ENCODE measurements at regions of chr10 and their contacts with region 1.

Region 1: GRCh38 chr10:784403-785088 is 95.1 kb upstream of the DIP2C start:
- DNase-seq: peak; percentile 56 to 60
- H3K4me3 ChIP-seq: peak overlapping the region; percentile 36
- H3K4me3 Mint-ChIP-seq: peak overlapping the region; percentile 54
- H3K27ac Mint-ChIP-seq: no peak overlapping the region
- H3K4me1 ChIP-seq: peaks cover 9% of the 10 kb centered on the region
- H3K4me1 Mint-ChIP-seq: no peaks in the 10 kb centered on the region
- H3K27me3 ChIP-seq: no peaks in the 10 kb centered on the region
- H3K27me3 Mint-ChIP-seq: no peaks in the 10 kb centered on the region
- CTCF ChIP-seq: peak in 1 of 2 experiments; percentile 28

Region 2: DNA sequence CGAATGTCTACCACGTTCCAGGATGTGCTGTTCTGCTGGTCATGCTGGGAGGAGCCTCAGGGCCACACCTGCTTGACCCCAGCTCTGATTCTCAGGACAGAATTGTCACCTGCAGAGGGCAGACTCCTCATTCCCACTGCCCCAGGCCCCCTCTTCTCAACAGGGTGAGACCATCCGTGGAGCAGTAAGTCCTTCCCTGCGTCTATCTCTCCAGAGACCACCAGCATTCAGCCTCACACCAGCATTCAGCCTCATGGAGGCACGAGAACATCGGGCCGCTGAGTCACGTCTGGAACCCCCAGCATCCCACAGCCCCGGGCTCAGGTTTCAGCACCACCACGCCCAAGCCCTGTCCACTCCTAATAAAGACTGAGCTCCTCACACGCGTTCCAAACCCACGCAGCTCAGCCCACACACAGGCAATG is 368.4 kb before region 1 on chr10:
- CTCF ChIA-PET with region 1: no interaction called
- POLR2A ChIA-PET with region 1: no interaction called
- intact Hi-C with region 1: loop called (anchors 10 kb)
- DNase-seq: peak; percentile 43 to 47
- H3K4me3 ChIP-seq: no peak overlapping the region
- H3K4me3 Mint-ChIP-seq: no peak overlapping the region
- H3K27ac Mint-ChIP-seq: no peak overlapping the region
- H3K4me1 ChIP-seq: peaks cover 12% of the 10 kb centered on the region
- H3K4me1 Mint-ChIP-seq: peaks cover 8% of the 10 kb centered on the region
- H3K27me3 ChIP-seq: no peaks in the 10 kb centered on the region
- H3K27me3 Mint-ChIP-seq: no peaks in the 10 kb centered on the region
- CTCF ChIP-seq: peak in 1 of 2 experiments; percentile 49

Region 3: GRCh38 chr10:500876-501275 is 283.7 kb before region 1 on chr10:
- CTCF ChIA-PET with region 1: no interaction called
- POLR2A ChIA-PET with region 1: no interaction called
- intact Hi-C with region 1: no loop called
- DNase-seq: no peak
- H3K4me3 ChIP-seq: no peak overlapping the region
- H3K4me3 Mint-ChIP-seq: no peak overlapping the region
- H3K27ac Mint-ChIP-seq: no peak overlapping the region
- H3K4me1 ChIP-seq: no peaks in the 10 kb centered on the region
- H3K4me1 Mint-ChIP-seq: no peaks in the 10 kb centered on the region
- H3K27me3 ChIP-seq: no peaks in the 10 kb centered on the region
- H3K27me3 Mint-ChIP-seq: no peaks in the 10 kb centered on the region
- CTCF ChIP-seq: no peak

Region 4: DNA sequence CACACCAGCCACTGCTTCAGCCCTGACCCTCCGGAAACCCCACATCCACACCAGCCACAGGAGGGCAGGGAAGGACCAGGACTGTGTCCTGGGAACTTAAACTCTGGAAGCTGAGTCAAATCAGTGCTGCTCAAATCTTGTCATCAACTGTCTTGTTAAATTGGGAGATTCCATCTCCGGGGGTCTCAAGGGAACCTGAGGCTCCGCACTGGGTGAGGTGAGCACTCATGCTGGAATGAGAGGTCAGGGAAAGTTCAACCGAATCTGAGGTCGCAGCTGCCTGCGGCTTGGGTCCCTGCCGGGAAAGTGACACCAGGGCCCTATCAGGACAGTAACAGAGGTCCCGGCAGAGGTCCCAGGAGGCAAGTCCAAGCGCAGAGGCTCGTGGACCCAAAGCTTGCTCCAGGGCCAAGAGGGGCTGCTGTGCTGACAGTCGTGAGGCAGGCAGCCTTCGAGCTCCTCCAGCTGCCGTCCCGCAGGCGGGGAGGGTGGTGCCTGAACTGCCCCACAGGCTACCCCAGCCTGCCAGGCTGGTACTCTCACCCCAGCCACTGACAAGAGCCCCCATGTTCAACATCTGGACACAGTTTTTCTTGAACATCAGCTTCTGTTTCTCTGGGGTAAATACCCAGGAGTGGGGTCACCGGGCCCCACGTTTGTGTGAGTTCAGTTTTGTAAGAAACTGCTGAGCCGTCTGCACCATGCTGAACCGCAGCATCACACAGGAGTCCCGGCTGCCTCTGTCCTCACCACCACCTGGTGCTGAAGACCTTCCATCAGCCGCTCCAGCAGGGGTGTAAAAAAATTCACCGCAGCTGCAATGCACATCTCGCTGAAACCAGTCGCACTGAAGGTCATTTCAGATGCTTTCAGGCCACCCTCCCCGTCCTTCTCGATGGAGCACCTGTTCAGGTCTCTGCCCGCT is 196.0 kb before region 1 on chr10:
- CTCF ChIA-PET with region 1: interaction called, 6 read pairs
- POLR2A ChIA-PET with region 1: no interaction called
- intact Hi-C with region 1: loop called (anchors 1 kb)
- DNase-seq: peak in 1 of 2 experiments; percentile 49
- H3K4me3 ChIP-seq: no peak overlapping the region
- H3K4me3 Mint-ChIP-seq: no peak overlapping the region
- H3K27ac Mint-ChIP-seq: no peak overlapping the region
- H3K4me1 ChIP-seq: no peaks in the 10 kb centered on the region
- H3K4me1 Mint-ChIP-seq: peaks cover 7% of the 10 kb centered on the region
- H3K27me3 ChIP-seq: no peaks in the 10 kb centered on the region
- H3K27me3 Mint-ChIP-seq: no peaks in the 10 kb centered on the region
- CTCF ChIP-seq: peak; percentile 21 to 61

Region 5: GRCh38 chr10:689433-690371 is 94.8 kb before region 1 on chr10 and contains the start of gene DIP2C:
- CTCF ChIA-PET with region 1: no interaction called
- POLR2A ChIA-PET with region 1: no interaction called
- intact Hi-C with region 1: loop called (anchors 1 kb)
- DNase-seq: peak; percentile 75 to 90
- H3K4me3 ChIP-seq: peak within 1 kb of the TSS; percentile 58
- H3K4me3 Mint-ChIP-seq: peak within 1 kb of the TSS; percentile 81
- H3K27ac Mint-ChIP-seq: peak within 1 kb of the TSS; percentile 44
- H3K4me1 ChIP-seq: peaks cover 17% of the 10 kb centered on the region
- H3K4me1 Mint-ChIP-seq: peaks cover 20% of the 10 kb centered on the region
- H3K27me3 ChIP-seq: no peaks in the 10 kb centered on the region
- H3K27me3 Mint-ChIP-seq: no peaks in the 10 kb centered on the region
- CTCF ChIP-seq: no peak
- total RNA-seq, gene DIP2C: 11.2 and 11.4 TPM in 2 replicates